Activated CD4-positive, alpha-beta memory T cell treated with anti-CD3 and anti-CD28 coated beads, Interleukin-2, amount 10 ng/mL, durations not matched to agents 7 days and 5 days (primary cell): ENCODE measurements at regions of chr17 and their contacts with region 1.

Region 1: DNA sequence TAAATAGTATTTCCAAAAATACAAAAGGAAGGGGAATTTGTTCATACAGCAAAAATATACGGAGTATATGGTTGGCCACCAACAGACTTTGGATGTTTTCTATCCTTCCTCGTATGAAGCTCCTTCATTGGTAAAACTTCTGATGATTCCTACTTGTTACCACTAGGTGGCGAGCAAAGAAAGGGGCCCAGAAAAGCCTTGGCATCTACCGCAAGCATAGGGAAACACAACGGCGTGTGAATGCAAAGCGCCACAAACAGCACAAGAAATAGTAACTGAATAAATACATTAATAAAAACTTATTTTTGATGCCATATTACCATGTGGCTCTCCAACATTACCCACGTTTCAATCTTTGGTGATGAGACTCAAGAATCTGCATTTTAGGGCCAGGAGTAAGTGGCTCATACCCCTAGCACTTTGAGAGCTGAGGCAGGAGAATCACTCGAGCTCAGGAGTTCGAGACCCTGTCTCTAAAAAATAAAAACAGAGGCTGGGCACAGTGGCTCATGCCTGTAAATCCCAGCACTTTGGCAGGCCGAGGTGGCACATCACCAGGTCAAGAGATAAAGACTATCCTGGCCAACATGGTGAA is 34.5 kb downstream of the YWHAE start:
- DNase-seq: peak; percentile 65
- H3K4me3 Mint-ChIP-seq: no peak overlapping the region
- H3K27ac Mint-ChIP-seq: no peak overlapping the region
- H3K4me1 Mint-ChIP-seq: peaks cover 68% of the 10 kb centered on the region
- H3K27me3 Mint-ChIP-seq: no peaks in the 10 kb centered on the region

Region 2: GRCh38 chr17:1122533-1123392 is 242.8 kb before region 1 on chr17:
- CTCF ChIA-PET with region 1: interaction called, 10 read pairs
- POLR2A ChIA-PET with region 1: no interaction called
- DNase-seq: peak; percentile 86
- H3K4me3 Mint-ChIP-seq: no peak overlapping the region
- H3K27ac Mint-ChIP-seq: peak overlapping the region; percentile 66
- H3K4me1 Mint-ChIP-seq: peaks cover 25% of the 10 kb centered on the region
- H3K27me3 Mint-ChIP-seq: no peaks in the 10 kb centered on the region

Region 3: GRCh38 chr17:1294157-1294717 is 71.3 kb before region 1 on chr17:
- CTCF ChIA-PET with region 1: no interaction called
- POLR2A ChIA-PET with region 1: no interaction called
- DNase-seq: peak; percentile 94
- H3K4me3 Mint-ChIP-seq: peak overlapping the region; percentile 36
- H3K27ac Mint-ChIP-seq: peak overlapping the region; percentile 96
- H3K4me1 Mint-ChIP-seq: peaks cover 76% of the 10 kb centered on the region
- H3K27me3 Mint-ChIP-seq: peaks cover 3% of the 10 kb centered on the region

Region 4: DNA sequence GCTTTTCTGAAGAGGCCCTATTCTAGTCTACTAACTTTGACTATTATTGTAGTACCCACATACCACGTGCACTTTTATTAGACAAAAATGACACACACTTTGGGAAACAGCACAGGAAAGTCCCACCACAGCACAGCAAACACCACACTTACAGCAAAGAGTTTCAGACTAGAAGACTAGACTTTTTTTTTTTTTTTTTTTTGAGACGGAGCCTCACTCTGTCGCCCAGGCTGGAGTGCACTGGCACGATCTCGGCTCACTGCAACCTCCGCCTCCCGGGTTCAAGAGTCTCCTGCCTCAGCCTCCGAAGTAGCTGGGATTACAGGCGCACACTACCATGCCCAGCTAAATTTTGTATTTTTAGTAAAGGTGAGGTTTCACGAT is 14.4 kb after region 1 on chr17:
- CTCF ChIA-PET with region 1: interaction called, 54 read pairs
- POLR2A ChIA-PET with region 1: interaction called, 16 read pairs
- DNase-seq: peak; percentile 34
- H3K4me3 Mint-ChIP-seq: no peak overlapping the region
- H3K27ac Mint-ChIP-seq: peak overlapping the region; percentile 45
- H3K4me1 Mint-ChIP-seq: peaks cover 68% of the 10 kb centered on the region
- H3K27me3 Mint-ChIP-seq: no peaks in the 10 kb centered on the region

Region 5: GRCh38 chr17:1399679-1400512 is 34.4 kb after region 1 on chr17 and contains the start of gene YWHAE:
- CTCF ChIA-PET with region 1: interaction called, 23 read pairs
- POLR2A ChIA-PET with region 1: interaction called, 15 read pairs
- DNase-seq: peak; percentile 97
- H3K4me3 Mint-ChIP-seq: peak within 1 kb of the TSS; percentile 94
- H3K27ac Mint-ChIP-seq: peak within 1 kb of the TSS; percentile 89
- H3K4me1 Mint-ChIP-seq: peaks cover 30% of the 10 kb centered on the region
- H3K27me3 Mint-ChIP-seq: no peaks in the 10 kb centered on the region
- total RNA-seq, gene YWHAE: 352 to 374 TPM

Region 6: GRCh38 chr17:1516388-1517161 is 151.0 kb after region 1 on chr17 and contains the start of gene INPP5K:
- CTCF ChIA-PET with region 1: interaction called, 69 read pairs
- POLR2A ChIA-PET with region 1: interaction called, 22 read pairs
- DNase-seq: peak; percentile 99
- H3K4me3 Mint-ChIP-seq: peak within 1 kb of the TSS; percentile 86
- H3K27ac Mint-ChIP-seq: peak within 1 kb of the TSS; percentile 85
- H3K4me1 Mint-ChIP-seq: peaks cover 35% of the 10 kb centered on the region
- H3K27me3 Mint-ChIP-seq: no peaks in the 10 kb centered on the region
- total RNA-seq, gene INPP5K: 52.4 to 58.1 TPM

Region 7: DNA sequence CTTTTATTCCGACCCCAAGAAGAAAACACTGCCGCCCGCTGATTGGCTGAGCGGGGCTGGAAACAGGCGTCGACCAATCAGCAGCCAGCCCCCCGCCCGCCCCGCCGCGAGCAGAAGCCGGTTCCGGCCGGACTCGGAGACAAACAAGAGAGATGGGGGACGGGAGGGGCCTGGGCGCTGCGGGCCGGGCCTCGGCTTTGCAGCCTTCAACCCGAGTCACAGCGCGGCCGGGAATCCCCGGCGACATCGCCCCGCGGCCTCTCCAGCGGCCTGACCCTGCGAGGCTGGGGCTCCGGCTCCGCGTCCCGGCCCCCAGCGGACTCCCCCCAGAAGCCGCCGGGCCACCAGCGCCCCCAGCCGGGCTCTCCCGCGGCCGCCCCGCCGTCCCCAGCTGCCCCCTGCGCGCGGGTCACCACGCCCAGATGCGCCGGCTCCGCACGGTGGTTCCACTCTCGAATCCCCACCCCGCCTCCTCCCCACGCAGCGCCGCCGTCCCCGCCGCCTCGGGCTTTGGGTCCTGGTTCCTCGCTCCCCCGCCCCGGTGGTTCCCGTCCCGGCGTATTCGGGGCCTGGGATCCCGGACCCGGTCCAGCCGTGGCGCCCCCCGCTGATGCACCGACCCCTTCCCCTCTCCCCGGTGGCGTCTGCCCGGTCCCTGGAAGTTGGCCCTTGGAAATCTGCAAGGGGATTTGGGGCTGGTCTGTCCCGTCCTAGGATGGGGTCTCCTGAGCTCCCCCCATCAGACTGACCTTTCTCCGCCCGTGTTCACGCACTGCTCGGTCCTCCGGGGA is 263.5 kb after region 1 on chr17:
- CTCF ChIA-PET with region 1: interaction called, 11 read pairs
- POLR2A ChIA-PET with region 1: no interaction called
- DNase-seq: peak; percentile 89
- H3K4me3 Mint-ChIP-seq: peak overlapping the region; percentile 83
- H3K27ac Mint-ChIP-seq: peak overlapping the region; percentile 53
- H3K4me1 Mint-ChIP-seq: peaks cover 17% of the 10 kb centered on the region
- H3K27me3 Mint-ChIP-seq: peaks cover 40% of the 10 kb centered on the region